AG04450 (cell line): ENCODE measurements at regions of chr18 and their contacts with region 1.

Region 1: GRCh38 chr18:25563816-25564683 is 212.1 kb upstream of the ZNF521 start:
- DNase-seq: no peak
- H3K4me3 ChIP-seq: no peak overlapping the region
- H3K27ac ChIP-seq: no peak overlapping the region
- H3K27me3 ChIP-seq: peaks cover 7% of the 10 kb centered on the region
- CTCF ChIP-seq: 0 out of 2 replicates have a peak, but pooled peaks have one; percentile 2

Region 2: DNA sequence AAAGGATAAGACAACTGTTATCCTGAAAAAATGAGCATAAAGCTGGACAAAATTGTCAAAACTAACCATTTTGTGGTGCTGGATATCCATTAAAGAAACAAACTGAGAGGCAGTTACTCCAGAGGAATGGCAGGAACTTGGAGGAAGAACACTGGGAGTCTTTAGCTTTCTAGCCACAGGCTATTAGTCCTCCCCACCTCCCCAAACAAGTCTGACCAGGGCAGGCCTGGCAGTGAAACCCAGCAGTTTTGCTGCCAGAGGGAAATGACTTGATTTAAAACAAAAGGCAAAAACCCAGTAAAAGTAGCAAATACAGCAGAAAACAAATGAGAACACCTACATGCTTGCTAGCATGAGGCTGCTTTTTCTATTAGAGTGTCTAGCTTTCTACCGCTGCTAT is 1201.3 kb before region 1 on chr18:
- CTCF ChIA-PET with region 1: no interaction called
- POLR2A ChIA-PET with region 1: no interaction called
- DNase-seq: no peak
- H3K4me3 ChIP-seq: no peak overlapping the region
- H3K27ac ChIP-seq: no peak overlapping the region
- H3K27me3 ChIP-seq: no peaks in the 10 kb centered on the region
- CTCF ChIP-seq: no peak

Region 3: DNA sequence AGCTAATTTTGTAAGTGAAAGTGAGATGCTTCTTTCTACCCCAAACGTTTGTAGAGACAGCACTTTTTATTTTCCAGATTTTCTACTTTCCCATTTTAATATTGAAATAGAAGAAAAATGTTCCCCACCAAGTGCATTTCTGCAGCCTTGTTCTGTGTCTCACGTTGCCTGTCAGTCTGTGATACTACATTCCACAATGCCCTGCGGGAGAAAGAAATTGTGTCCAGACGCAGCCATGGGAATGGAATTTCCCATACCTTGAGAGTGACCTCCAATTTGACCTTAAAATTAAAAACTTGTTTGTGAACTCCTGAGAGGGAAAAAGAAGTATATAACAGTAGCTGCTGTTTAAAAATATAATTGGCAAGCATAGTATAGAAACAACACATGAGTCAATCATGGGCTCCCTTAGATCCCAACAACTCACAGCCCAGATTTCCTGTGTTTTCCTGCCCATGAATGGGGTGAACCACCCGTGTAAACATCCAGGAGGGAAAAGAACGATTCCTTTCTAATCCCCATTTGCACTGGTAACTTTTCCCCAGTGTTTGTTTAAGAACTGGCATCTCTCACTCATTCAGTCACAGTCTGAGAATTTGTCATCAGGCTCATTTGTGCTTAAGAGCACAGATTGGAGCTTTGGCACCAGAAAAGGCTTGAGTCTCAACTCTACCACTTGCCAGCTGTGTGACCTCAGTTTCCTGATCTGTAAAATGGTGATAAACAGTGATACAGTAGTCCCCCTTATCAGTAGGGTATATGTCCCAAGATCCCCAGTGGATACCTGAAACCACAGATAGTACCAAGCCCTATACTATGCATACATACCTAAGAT is 46.0 kb before region 1 on chr18:
- CTCF ChIA-PET with region 1: no interaction called
- POLR2A ChIA-PET with region 1: no interaction called
- DNase-seq: no peak
- H3K4me3 ChIP-seq: no peak overlapping the region
- H3K27ac ChIP-seq: no peak overlapping the region
- H3K27me3 ChIP-seq: peaks cover 3% of the 10 kb centered on the region
- CTCF ChIP-seq: no peak

Region 4: GRCh38 chr18:25592804-25593360 is 28.8 kb after region 1 on chr18:
- CTCF ChIA-PET with region 1: interaction called, 13 read pairs
- POLR2A ChIA-PET with region 1: no interaction called
- DNase-seq: no peak
- H3K4me3 ChIP-seq: no peak overlapping the region
- H3K27ac ChIP-seq: no peak overlapping the region
- H3K27me3 ChIP-seq: no peaks in the 10 kb centered on the region
- CTCF ChIP-seq: no peak